ENCODE measurements at regions of chr1 and their contacts with region 1.

Region 1: DNA sequence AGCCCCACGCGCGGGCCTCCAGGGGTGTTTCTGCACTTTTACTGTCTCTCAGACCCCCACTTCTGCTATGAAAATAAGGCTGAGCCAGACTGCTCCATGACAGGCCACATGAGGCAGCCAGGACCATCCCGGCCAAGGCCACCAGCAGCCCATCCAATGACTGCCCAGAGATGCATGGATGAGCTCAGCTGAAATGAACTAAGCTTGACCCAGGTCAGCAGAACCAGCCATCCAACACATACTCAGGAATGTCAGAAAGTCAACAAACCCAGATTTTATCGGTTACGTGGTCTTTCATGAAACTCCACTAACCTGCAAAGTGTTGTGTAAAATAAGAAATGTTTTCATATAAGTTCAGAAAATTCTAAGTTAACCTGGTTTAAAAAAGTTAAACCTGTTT is 51.2 kb downstream of the CCDC185 start:
- DNase-seq: no peak
- H3K4me3 ChIP-seq: no peak overlapping the region
- H3K4me3 Mint-ChIP-seq: no peak overlapping the region
- H3K27ac Mint-ChIP-seq: no peak overlapping the region
- H3K4me1 ChIP-seq: no peaks in the 10 kb centered on the region
- H3K4me1 Mint-ChIP-seq: no peaks in the 10 kb centered on the region
- H3K27me3 ChIP-seq: no peaks in the 10 kb centered on the region; the same call in 1 of the 2 replicates
- H3K27me3 Mint-ChIP-seq: no peaks in the 10 kb centered on the region
- CTCF ChIP-seq: no peak

Region 2: DNA sequence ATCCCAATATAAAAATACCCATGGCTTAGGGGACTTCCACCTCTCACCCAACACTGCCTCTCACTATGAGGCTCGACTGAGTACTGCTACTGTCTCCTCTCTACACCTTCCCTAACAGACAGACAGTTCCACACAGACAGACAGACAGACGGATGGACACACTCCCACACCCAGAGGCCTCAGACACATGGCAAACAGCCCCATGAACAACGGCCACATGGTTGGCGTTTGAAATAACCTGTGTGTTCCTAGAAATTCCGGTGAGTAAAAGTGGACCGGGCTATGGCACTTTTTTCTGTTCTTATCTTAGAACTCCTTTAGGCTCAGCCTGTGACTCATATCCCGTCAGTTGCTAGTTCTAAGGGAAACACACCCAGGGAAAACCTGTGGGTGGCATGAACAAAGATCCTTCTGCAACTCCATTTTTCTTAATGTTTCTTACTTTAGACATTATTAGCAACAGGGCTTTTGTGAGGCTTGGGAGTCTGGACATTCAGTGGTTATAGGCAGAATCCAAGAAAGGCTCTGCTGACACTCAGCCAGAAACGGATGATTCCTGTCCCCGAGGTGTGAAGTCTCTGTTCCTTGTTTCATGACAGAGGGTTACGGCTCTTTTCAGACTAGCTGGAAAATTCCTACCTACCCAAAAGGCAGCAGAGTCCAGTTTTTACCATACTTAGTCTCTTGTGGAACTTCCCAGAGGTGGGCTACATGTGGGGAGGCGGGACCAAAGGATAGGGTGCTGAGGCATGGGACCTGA is 210.8 kb before region 1 on chr1:
- CTCF ChIA-PET with region 1: no interaction called
- POLR2A ChIA-PET with region 1: no interaction called
- intact Hi-C with region 1: no loop called
- DNase-seq: peak in 1 of 2 experiments; percentile 12
- H3K4me3 ChIP-seq: no peak overlapping the region
- H3K4me3 Mint-ChIP-seq: no peak overlapping the region
- H3K27ac Mint-ChIP-seq: peak overlapping the region; percentile 49
- H3K4me1 ChIP-seq: peaks cover 15% of the 10 kb centered on the region
- H3K4me1 Mint-ChIP-seq: peaks cover 20% of the 10 kb centered on the region
- H3K27me3 ChIP-seq: no peaks in the 10 kb centered on the region
- H3K27me3 Mint-ChIP-seq: no peaks in the 10 kb centered on the region
- CTCF ChIP-seq: no peak

Region 3: GRCh38 chr1:223479718-223480425 is 35.4 kb after region 1 on chr1:
- CTCF ChIA-PET with region 1: no interaction called
- POLR2A ChIA-PET with region 1: no interaction called
- intact Hi-C with region 1: loop called (anchors 5 kb)
- DNase-seq: no peak
- H3K4me3 ChIP-seq: no peak overlapping the region
- H3K4me3 Mint-ChIP-seq: no peak overlapping the region
- H3K27ac Mint-ChIP-seq: no peak overlapping the region
- H3K4me1 ChIP-seq: peaks cover 3% of the 10 kb centered on the region; the same call in 1 of the 2 replicates
- H3K4me1 Mint-ChIP-seq: peaks cover 24% of the 10 kb centered on the region
- H3K27me3 ChIP-seq: no peaks in the 10 kb centered on the region
- H3K27me3 Mint-ChIP-seq: no peaks in the 10 kb centered on the region
- CTCF ChIP-seq: no peak